Left ventricle myocardium superior (tissue), 1 donor: ENCODE measurements at regions of chr11 and their contacts with region 1.

Region 1: GRCh38 chr11:68257475-68258362 is 14.1 kb downstream of the C11orf24 start:
- DNase-seq: peak; percentile 99
- ATAC-seq: peak; percentile 88

Region 2: GRCh38 chr11:68146704-68147474 is 110.8 kb before region 1 on chr11:
- intact Hi-C with region 1: no loop called
- DNase-seq: peak; percentile 64
- ATAC-seq: peak; percentile 75

Region 3: DNA sequence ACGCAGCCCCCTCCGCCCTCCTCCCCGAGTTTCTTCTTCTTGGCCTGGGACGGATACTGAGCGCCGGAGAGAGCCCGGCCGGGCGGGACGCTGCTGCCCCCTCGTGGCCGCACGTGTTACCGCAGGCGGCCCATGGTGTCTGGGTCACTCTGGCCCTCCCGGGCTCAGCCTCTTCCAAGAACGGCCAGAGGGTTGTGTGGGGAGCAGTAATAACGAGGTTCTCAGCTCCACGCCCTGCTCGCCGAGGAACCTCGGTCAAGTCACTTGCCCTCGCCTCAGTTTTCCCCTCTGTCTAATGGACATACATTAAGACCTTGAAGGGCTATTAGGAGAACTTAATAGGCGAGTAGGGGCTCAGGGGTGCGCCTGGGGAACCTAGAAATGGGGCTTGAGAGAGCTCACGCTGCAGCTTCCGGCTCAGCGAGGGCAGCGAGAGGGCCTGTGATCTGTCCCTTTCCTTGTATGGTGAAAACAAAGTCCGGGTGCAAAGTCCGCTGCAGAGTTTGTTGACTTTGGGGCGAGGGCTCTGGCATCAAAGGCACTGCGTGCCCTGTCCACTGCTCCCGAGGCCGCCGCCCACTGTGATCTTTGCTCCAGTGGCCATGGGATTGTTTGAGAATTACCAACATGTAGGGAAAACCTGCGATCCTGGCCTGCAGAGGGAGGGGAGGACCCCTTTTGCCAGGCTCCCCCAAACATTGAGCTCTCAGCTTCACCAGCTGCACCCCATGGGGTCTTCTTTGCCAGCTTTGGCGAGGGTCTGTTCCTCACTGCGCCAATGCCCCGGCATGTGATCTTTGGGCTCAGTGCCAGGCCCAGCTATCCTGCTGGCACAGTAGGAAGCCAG is 40.3 kb after region 1 on chr11:
- intact Hi-C with region 1: loop called (anchors 5 kb)
- DNase-seq: peak; percentile 89
- ATAC-seq: peak; percentile 98

Region 4: GRCh38 chr11:68383976-68384501 is 126.3 kb after region 1 on chr11:
- intact Hi-C with region 1: loop called (anchors 5 kb)
- DNase-seq: peak; percentile 82
- ATAC-seq: peak; percentile 29

Region 5: GRCh38 chr11:68447015-68447801 is 189.5 kb after region 1 on chr11:
- intact Hi-C with region 1: loop called (anchors 10 kb)
- DNase-seq: peak; percentile 86
- ATAC-seq: peak; percentile 91